ENCODE measurements at regions of chr3 and their contacts with region 1.

Region 1: DNA sequence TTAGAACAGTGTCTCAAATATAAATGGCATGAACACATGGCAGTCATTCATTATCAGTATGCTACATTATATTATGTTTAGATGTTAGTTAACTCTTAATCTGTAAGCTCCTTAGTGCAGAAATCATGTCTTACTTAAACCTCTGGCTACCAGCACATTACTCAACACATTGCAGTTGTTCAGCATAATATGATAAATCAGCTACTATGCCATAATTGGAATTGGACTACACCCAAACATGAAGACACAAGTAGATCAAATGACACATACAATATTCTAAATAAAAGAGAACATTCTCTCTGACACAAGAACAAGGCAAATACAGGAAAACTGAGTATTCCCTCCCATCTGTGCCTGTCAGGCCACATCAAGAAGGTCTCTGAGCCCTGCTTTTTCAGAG is 116.1 kb downstream of the PCCB start:
- DNase-seq: no peak
- ATAC-seq: no peak
- H3K4me3 Mint-ChIP-seq: no peak overlapping the region
- H3K27ac Mint-ChIP-seq: no peak overlapping the region
- H3K4me1 Mint-ChIP-seq: no peaks in the 10 kb centered on the region
- H3K27me3 Mint-ChIP-seq: no peaks in the 10 kb centered on the region

Region 2: DNA sequence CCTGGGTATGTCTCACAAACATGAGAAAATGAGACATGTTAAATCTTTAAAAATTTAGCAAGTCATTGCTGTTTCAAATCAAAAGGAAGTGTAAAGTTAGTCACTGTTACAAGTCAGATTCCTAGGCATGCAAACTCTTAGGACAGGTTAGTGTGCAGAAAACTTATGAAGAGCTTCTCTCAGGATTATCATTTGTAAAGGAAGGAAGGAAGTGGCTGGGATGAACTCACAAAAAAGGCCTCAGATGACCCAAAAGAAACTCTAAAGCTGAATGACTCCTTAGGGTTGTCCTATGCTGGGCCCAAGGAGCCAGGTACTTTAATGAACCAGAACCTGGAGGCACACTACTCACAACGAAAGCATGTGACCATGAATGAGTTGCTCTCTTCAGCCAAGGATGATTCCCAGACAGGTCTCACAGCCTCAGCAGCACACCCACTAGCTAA is 195.2 kb before region 1 on chr3:
- CTCF ChIA-PET with region 1: no interaction called
- POLR2A ChIA-PET with region 1: no interaction called
- DNase-seq: no peak
- ATAC-seq: no peak
- H3K4me3 Mint-ChIP-seq: no peak overlapping the region
- H3K27ac Mint-ChIP-seq: peak overlapping the region; percentile 61
- H3K4me1 Mint-ChIP-seq: peaks cover 29% of the 10 kb centered on the region
- H3K27me3 Mint-ChIP-seq: no peaks in the 10 kb centered on the region

Region 3: DNA sequence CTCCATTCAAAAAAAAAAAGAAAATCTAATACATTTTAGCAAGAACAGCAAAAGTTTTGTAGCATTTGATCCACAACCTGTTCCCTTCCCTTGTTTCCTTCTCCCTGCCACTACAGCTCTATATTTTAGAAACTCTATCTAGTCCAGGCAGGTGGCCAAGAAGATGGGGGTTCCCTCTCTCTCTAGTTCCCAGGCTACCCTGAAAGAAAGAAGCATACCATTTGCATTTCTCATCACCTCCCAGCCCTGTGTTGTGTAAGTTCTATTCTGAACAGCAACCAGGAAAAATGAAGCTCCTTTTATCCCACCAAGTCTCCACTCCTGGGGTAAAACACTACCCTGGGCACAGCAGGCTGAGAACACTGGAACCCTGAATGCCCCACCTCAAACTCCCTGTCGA is 16.2 kb before region 1 on chr3:
- CTCF ChIA-PET with region 1: interaction called, 12 read pairs
- POLR2A ChIA-PET with region 1: no interaction called
- DNase-seq: no peak
- ATAC-seq: no peak
- H3K4me3 Mint-ChIP-seq: no peak overlapping the region
- H3K27ac Mint-ChIP-seq: no peak overlapping the region
- H3K4me1 Mint-ChIP-seq: peaks cover 10% of the 10 kb centered on the region
- H3K27me3 Mint-ChIP-seq: no peaks in the 10 kb centered on the region

Region 4: GRCh38 chr3:136390574-136390973 is 24.3 kb after region 1 on chr3:
- CTCF ChIA-PET with region 1: interaction called, 11 read pairs
- POLR2A ChIA-PET with region 1: no interaction called
- DNase-seq: no peak
- ATAC-seq: no peak
- H3K4me3 Mint-ChIP-seq: no peak overlapping the region
- H3K27ac Mint-ChIP-seq: no peak overlapping the region
- H3K4me1 Mint-ChIP-seq: no peaks in the 10 kb centered on the region
- H3K27me3 Mint-ChIP-seq: no peaks in the 10 kb centered on the region

Measured in activated CD8-positive, alpha-beta T cell treated with anti-CD3 and anti-CD28 coated beads, Interleukin-2, amount 10 ng/mL, durations not matched to agents 7 days and 5 days (primary cell).